B cell (primary cell): ENCODE measurements at regions of chr6 and their contacts with region 1.

Region 1: DNA sequence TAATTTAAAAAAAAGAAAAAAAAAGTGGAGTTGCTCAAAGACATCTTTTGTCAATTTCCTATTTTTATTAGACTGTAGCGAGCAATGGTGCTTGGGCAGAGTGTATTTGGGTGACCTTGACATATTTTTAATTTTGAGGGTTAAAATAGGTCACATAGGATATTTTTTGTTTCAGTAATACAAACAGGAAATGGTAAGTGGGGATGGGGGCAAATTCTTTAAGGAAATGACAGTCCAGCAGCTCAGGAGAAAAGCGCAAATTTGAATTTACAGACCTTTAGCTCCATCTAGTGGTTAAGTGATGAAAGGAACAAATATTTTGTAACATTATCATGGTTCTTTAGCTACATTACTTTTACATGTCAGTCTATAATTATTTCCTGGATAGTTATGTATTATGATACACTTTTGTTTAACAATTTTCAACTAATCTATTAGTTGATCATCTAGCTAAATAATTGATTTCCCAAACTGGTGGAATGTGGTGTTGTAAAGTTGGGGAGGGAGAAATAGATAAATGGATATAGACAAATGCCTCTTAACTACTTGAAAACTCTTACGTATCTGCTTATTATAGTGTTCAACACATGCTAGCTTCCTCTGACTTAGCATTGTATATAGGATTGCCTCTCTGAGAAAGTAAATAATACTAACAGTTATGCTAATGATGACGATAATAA is 10.0 kb downstream of the CITED2 start:
- DNase-seq: peak; percentile 74
- ATAC-seq: peak; percentile 36
- H3K4me3 ChIP-seq: no peak overlapping the region
- H3K4me3 Mint-ChIP-seq: no peak overlapping the region
- H3K27ac ChIP-seq: no peak overlapping the region
- H3K27ac Mint-ChIP-seq: peak overlapping the region; percentile 54
- H3K4me1 ChIP-seq: peaks cover 8 to 11% of the 10 kb centered on the region in 2 donors
- H3K4me1 Mint-ChIP-seq: peaks cover 28% of the 10 kb centered on the region
- H3K27me3 ChIP-seq: no peaks in the 10 kb centered on the region
- H3K27me3 Mint-ChIP-seq: no peaks in the 10 kb centered on the region
- CTCF ChIP-seq: peak; percentile 93

Region 2: GRCh38 chr6:138588805-138589434 is 775.5 kb before region 1 on chr6:
- CTCF ChIA-PET with region 1: interaction called, 3 read pairs
- POLR2A ChIA-PET with region 1: no interaction called
- intact Hi-C with region 1: loop called (anchors 5 kb)
- DNase-seq: peak; percentile 76
- ATAC-seq: peak; percentile 68
- H3K4me3 ChIP-seq: no peak overlapping the region
- H3K4me3 Mint-ChIP-seq: no peak overlapping the region
- H3K27ac ChIP-seq: no peak overlapping the region
- H3K27ac Mint-ChIP-seq: no peak overlapping the region
- H3K4me1 ChIP-seq: peaks cover 12 to 13% of the 10 kb centered on the region in 2 donors
- H3K4me1 Mint-ChIP-seq: peaks cover 20% of the 10 kb centered on the region
- H3K27me3 ChIP-seq: no peaks in the 10 kb centered on the region
- H3K27me3 Mint-ChIP-seq: no peaks in the 10 kb centered on the region
- CTCF ChIP-seq: peak; percentile 92

Region 3: GRCh38 chr6:138987640-138988468 is 376.6 kb before region 1 on chr6 and contains the start of gene REPS1:
- CTCF ChIA-PET with region 1: interaction called, 20 read pairs
- POLR2A ChIA-PET with region 1: no interaction called
- intact Hi-C with region 1: no loop called
- DNase-seq: peak; percentile 91
- ATAC-seq: peak; percentile 91
- H3K4me3 ChIP-seq: peak within 1 kb of the TSS; percentile 52 to 97 (median 87)
- H3K4me3 Mint-ChIP-seq: peak within 1 kb of the TSS; percentile 87
- H3K27ac ChIP-seq: peak within 1 kb of the TSS; percentile 78 to 90
- H3K27ac Mint-ChIP-seq: peak within 1 kb of the TSS; percentile 95
- H3K4me1 ChIP-seq: peaks cover 23 to 26% of the 10 kb centered on the region in 2 donors
- H3K4me1 Mint-ChIP-seq: peaks cover 21% of the 10 kb centered on the region
- H3K27me3 ChIP-seq: no peaks in the 10 kb centered on the region
- H3K27me3 Mint-ChIP-seq: no peaks in the 10 kb centered on the region
- CTCF ChIP-seq: peak; percentile 98
- total RNA-seq, gene REPS1: 55.5 and 57.1 TPM in 2 replicates

Region 4: GRCh38 chr6:139219271-139219729 is 145.1 kb before region 1 on chr6:
- CTCF ChIA-PET with region 1: interaction called, 274 read pairs
- POLR2A ChIA-PET with region 1: interaction called, 5 read pairs
- intact Hi-C with region 1: loop called (anchors 1 kb)
- DNase-seq: peak; percentile 83
- ATAC-seq: peak; percentile 100
- H3K4me3 ChIP-seq: no peak overlapping the region
- H3K4me3 Mint-ChIP-seq: peak overlapping the region; percentile 40
- H3K27ac ChIP-seq: no peak overlapping the region
- H3K27ac Mint-ChIP-seq: peak overlapping the region; percentile 79
- H3K4me1 ChIP-seq: peaks cover 4 to 8% of the 10 kb centered on the region in 2 donors
- H3K4me1 Mint-ChIP-seq: peaks cover 13% of the 10 kb centered on the region
- H3K27me3 ChIP-seq: no peaks in the 10 kb centered on the region
- H3K27me3 Mint-ChIP-seq: no peaks in the 10 kb centered on the region
- CTCF ChIP-seq: peak; percentile 84

Region 5: DNA sequence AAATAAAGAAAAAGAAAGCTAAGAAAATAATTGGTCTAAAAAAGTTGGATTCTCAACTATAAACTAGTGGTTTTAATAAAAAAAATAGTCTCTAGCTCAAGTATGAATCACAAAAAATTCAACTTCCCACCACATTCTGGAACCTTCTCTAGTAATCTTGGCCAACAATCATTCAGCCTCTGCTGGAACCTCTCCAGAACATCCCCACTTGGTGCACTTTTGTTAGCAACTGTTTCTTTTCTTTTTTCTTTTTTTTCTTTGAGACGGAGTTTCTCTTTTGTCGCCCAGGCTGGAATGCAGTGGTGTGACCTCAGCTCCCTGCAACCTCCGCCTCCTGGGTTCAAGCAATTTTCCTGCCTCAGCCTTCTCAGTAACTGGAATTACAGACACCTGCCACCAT is 108.4 kb before region 1 on chr6:
- CTCF ChIA-PET with region 1: interaction called, 24 read pairs
- POLR2A ChIA-PET with region 1: no interaction called
- intact Hi-C with region 1: no loop called
- DNase-seq: no peak
- ATAC-seq: no peak
- H3K4me3 ChIP-seq: no peak overlapping the region
- H3K4me3 Mint-ChIP-seq: no peak overlapping the region
- H3K27ac ChIP-seq: no peak overlapping the region
- H3K27ac Mint-ChIP-seq: no peak overlapping the region
- H3K4me1 ChIP-seq: no peaks in the 10 kb centered on the region
- H3K4me1 Mint-ChIP-seq: peaks cover 4% of the 10 kb centered on the region
- H3K27me3 ChIP-seq: no peaks in the 10 kb centered on the region
- H3K27me3 Mint-ChIP-seq: no peaks in the 10 kb centered on the region
- CTCF ChIP-seq: no peak

Region 6: DNA sequence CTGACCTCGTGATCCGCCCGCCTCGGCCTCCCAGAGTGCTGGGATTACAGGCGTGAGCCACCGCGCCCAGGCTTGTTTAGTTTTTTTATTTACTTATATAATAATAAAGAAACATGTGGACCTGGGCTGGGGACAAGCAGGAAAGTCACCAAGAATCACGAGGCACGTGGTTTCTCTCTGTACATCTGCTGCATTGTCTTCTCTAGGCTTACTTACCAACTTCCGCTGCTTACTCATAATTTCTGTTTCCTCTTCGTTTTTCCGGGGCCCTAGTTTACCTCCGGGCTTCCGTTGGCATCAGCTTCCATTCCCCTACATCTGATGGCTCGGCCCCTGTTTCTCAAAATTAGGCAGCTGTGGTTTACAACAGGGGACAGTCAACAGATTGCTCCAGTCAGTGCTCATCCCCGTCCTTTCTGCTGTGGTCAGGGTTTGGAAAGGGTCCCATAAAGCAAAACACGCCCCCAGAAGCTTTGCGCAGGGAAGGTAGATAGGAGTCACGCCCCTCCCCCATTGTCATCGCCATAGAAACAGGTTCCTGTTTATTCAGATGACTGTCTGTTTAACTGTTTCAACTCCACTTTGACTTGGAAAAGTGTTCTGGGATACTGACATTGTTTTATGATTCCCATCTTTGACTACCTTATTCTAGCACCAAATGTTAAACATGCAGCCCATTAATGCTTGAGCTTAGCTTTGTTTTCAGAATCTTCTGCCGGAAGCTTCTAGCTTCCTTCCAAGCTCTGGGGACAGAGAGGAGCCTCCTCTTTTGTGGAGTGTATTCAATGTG is 40.7 kb before region 1 on chr6:
- CTCF ChIA-PET with region 1: interaction called, 26 read pairs
- POLR2A ChIA-PET with region 1: no interaction called
- intact Hi-C with region 1: no loop called
- DNase-seq: peak; percentile 88
- ATAC-seq: peak; percentile 74
- H3K4me3 ChIP-seq: peak overlapping the region; percentile 56 to 81 (median 67)
- H3K4me3 Mint-ChIP-seq: peak overlapping the region; percentile 92
- H3K27ac ChIP-seq: peak overlapping the region; percentile 83 to 92
- H3K27ac Mint-ChIP-seq: peak overlapping the region; percentile 98
- H3K4me1 ChIP-seq: peaks cover 30 to 42% of the 10 kb centered on the region in 2 donors
- H3K4me1 Mint-ChIP-seq: peaks cover 37% of the 10 kb centered on the region
- H3K27me3 ChIP-seq: no peaks in the 10 kb centered on the region
- H3K27me3 Mint-ChIP-seq: no peaks in the 10 kb centered on the region
- CTCF ChIP-seq: no peak

Region 7: GRCh38 chr6:139600919-139601475 is 236.6 kb after region 1 on chr6:
- CTCF ChIA-PET with region 1: no interaction called
- POLR2A ChIA-PET with region 1: no interaction called
- intact Hi-C with region 1: no loop called
- DNase-seq: no peak
- ATAC-seq: no peak
- H3K4me3 ChIP-seq: no peak overlapping the region
- H3K4me3 Mint-ChIP-seq: no peak overlapping the region
- H3K27ac ChIP-seq: no peak overlapping the region
- H3K27ac Mint-ChIP-seq: no peak overlapping the region
- H3K4me1 ChIP-seq: no peaks in the 10 kb centered on the region
- H3K4me1 Mint-ChIP-seq: no peaks in the 10 kb centered on the region
- H3K27me3 ChIP-seq: no peaks in the 10 kb centered on the region
- H3K27me3 Mint-ChIP-seq: no peaks in the 10 kb centered on the region
- CTCF ChIP-seq: no peak